ENCODE measurements at regions of chr10 and their contacts with region 1.

Region 1: GRCh38 chr10:23994479-23995046 is 214.4 kb upstream of the KIAA1217 start:
- DNase-seq: peak; percentile 50
- ATAC-seq: peak; percentile 76

Region 2: GRCh38 chr10:23917251-23917840 is 77.2 kb before region 1 on chr10:
- intact Hi-C with region 1: no loop called
- DNase-seq: no peak
- ATAC-seq: no peak

Region 3: DNA sequence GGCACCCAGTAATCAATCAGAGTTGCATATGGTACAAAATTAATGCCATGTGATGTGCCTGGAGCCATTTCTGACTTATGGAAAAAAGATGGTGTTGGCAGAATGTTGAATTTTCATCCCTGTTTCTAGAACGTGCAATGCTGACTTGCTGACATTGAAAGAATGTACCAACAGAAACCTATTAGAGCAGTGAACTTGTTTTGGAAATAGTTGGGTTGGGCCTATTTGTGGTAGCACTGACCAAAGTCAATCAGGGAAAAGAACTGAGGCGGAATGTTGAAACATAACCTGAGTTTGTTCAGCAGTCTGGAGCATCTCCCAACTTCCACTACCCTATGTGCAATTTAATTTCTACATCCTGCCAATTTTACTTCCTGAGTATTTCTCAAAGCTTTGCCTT is 202.7 kb after region 1 on chr10:
- intact Hi-C with region 1: loop called (anchors 2 kb)
- DNase-seq: no peak
- ATAC-seq: no peak

Region 4: DNA sequence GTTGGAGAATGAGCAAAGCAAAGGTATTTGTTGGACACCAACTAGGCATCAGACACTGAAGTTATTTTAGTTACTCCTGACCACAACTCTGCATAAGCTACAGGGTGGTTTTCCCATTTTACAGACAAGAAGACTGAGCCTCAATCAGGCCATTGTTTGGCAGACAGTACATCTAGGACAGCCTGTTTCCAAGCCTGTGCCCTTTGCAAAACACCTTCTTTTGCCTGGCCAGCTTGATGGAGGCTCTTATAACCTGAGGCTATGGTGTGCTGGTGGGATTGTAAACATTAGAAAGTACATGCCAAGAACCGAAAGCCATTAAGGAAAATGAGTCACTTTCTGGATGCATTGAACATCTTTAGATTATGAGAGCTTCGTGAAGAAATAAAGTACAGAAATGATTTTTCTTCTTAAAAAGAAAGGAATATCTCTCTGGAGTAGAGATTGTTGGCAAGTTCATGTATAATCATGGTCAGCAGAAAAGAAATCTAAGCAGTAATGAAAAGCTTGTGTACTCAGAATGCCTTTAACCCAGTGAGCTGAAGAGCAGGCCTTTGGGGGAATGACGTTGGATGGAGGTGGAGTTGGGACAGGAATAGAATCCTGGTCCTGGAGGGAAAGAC is 354.9 kb after region 1 on chr10:
- intact Hi-C with region 1: loop called (anchors 10 kb)
- DNase-seq: no peak
- ATAC-seq: peak; percentile 59

Region 5: GRCh38 chr10:24503461-24504320 is 509.1 kb after region 1 on chr10:
- intact Hi-C with region 1: loop called (anchors 10 kb)
- DNase-seq: no peak
- ATAC-seq: peak; percentile 60

Measured in left ventricle myocardium superior (tissue), 1 donor.